Activated B cell treated with CpG ODN at 0.5 μM for 24 hours (primary cell): ENCODE measurements at regions of chr3 and their contacts with region 1.

Region 1: GRCh38 chr3:179604321-179605078 is at the starts of genes MRPL47 and NDUFB5:
- DNase-seq: peak; percentile 82
- ATAC-seq: peak; percentile 96
- H3K4me3 Mint-ChIP-seq: peak within 1 kb of the TSS; percentile 99
- H3K27ac Mint-ChIP-seq: peak within 1 kb of the TSS; percentile 99
- H3K4me1 Mint-ChIP-seq: peaks cover 51% of the 10 kb centered on the region
- H3K27me3 Mint-ChIP-seq: no peaks in the 10 kb centered on the region
- CTCF ChIP-seq: no peak
- total RNA-seq, gene MRPL47: 38.6 and 44.3 TPM in 2 replicates
- total RNA-seq, gene NDUFB5: 63.5 and 67.3 TPM in 2 replicates

Region 2: DNA sequence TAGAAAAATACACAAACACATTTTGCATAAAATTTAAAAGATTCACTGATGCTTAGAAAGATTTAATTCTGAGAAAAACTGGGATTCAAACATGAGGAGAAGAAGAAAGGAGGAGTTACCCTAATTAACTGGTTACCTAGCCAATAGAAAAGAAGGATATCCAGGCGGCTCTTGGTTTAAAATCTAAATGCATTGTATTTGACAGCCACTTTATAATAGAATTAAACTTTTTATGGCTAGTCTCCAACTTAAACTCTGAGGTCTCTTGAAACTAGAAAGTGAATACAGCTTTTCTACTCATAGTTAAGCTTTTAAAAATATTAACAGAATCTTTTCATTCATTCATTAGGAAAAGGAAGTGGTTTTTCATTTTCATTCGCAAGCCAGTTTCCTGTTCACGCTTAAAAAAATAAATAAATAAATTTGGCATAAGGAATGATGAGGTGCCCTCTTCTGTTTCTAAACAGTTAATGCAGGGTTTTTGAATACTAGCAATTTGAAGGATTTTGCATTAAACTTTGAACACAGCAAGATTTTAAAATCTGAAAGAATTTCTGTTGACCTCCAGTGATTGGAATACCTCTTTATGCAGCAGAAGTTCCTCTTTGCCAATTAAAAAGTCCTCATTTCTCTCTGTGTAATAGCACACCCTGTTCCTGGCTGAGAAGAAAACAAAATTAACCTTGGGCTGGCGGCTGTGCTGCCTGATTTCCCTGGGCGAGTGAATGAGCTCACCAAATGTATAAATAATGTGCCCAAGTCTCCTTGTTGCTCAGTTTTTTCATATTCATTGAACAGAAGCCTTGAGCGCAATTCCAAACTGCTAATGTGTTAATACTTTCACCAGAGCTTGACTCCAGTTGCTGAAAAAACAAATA is 638.0 kb before region 1 on chr3:
- CTCF ChIA-PET with region 1: no interaction called
- POLR2A ChIA-PET with region 1: no interaction called
- intact Hi-C with region 1: loop called (anchors 5 kb)
- DNase-seq: no peak
- ATAC-seq: no peak
- H3K4me3 Mint-ChIP-seq: peak overlapping the region; percentile 76
- H3K27ac Mint-ChIP-seq: peak overlapping the region; percentile 81
- H3K4me1 Mint-ChIP-seq: peaks cover 46% of the 10 kb centered on the region
- H3K27me3 Mint-ChIP-seq: no peaks in the 10 kb centered on the region
- CTCF ChIP-seq: no peak

Region 3: DNA sequence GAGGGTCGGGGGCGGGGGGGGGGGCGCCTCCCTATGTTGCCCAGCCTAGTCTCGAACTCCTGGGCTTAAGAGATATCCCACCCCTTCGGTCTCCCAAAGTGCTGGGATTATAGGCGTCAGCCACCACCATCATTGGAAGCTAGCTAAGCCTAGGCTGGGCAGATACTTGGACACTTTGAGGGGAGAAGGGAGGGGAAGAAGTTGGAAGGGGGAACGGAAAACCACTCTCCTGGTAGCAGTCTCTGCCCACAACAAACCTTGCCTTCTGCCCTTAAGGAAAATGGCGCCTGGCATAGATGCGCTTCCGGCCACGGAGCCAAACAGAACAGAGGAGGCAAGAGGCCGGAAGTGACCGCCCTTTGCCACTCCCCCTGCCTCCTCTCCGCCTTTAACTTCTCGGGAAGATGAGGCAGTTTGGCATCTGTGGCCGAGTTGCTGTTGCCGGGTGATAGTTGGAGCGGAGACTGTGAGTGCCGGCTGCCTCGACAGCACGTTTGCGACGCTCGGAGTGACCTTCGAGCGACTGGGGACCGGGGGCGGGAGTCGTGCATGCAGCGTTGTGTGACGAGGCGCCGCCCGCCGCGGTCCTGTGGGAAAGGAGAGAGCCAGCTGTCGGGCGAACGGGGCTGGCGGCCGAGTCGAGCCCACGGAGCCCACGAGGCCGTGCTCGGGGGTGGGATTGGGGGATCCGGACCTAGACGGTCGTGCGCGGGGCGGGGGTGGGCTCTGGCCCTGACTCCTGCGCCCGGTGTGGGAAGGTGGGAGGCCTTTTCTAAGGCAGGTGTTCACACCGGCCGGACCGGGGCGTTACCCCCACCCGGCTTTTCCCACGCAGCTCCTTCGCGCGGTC is 256.9 kb before region 1 on chr3 and contains the start of gene MFN1:
- CTCF ChIA-PET with region 1: no interaction called
- POLR2A ChIA-PET with region 1: interaction called, 7 read pairs
- intact Hi-C with region 1: loop called (anchors 1 kb)
- DNase-seq: peak; percentile 80
- ATAC-seq: peak; percentile 88
- H3K4me3 Mint-ChIP-seq: peak within 1 kb of the TSS; percentile 98
- H3K27ac Mint-ChIP-seq: peak within 1 kb of the TSS; percentile 95
- H3K4me1 Mint-ChIP-seq: peaks cover 35% of the 10 kb centered on the region
- H3K27me3 Mint-ChIP-seq: no peaks in the 10 kb centered on the region
- CTCF ChIP-seq: no peak
- total RNA-seq, gene MFN1: 64.9 and 65.3 TPM in 2 replicates

Region 4: DNA sequence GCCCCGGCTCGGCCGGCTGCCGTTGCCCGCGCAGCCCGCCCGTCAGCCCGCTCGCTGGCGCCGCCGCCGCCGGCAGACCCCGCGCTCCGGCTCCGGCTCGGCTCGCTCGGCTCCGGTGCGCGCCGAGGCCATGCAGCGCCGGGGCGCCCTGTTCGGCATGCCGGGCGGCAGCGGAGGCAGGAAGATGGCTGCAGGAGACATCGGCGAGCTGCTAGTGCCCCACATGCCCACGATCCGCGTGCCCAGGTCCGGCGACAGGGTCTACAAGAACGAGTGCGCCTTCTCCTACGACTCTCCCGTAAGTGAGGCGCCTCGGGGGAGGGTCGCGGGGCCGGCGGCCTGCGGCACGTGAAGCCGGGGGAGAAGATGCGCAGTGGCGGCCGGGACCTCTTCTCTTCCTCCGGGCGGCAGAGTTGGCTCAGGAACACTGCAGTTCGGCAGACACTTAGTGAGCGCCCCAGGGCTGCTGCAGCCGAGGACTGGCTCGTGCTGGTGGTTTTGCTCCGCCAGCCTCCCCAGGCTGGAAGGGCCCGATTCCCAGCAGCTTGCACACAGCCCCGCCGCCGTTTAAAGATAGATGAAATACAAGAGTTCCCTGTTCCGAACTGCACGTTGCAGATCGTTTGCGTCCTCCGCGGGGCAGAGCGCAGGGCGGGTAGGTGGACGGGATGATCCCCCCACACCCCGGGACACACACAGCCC is 48.7 kb after region 1 on chr3:
- CTCF ChIA-PET with region 1: interaction called, 4 read pairs
- POLR2A ChIA-PET with region 1: interaction called, 27 read pairs
- intact Hi-C with region 1: loop called (anchors 1 kb)
- DNase-seq: peak; percentile 66
- ATAC-seq: peak; percentile 38
- H3K4me3 Mint-ChIP-seq: peak overlapping the region; percentile 91
- H3K27ac Mint-ChIP-seq: peak overlapping the region; percentile 87
- H3K4me1 Mint-ChIP-seq: peaks cover 25% of the 10 kb centered on the region
- H3K27me3 Mint-ChIP-seq: no peaks in the 10 kb centered on the region
- CTCF ChIP-seq: no peak

Region 5: DNA sequence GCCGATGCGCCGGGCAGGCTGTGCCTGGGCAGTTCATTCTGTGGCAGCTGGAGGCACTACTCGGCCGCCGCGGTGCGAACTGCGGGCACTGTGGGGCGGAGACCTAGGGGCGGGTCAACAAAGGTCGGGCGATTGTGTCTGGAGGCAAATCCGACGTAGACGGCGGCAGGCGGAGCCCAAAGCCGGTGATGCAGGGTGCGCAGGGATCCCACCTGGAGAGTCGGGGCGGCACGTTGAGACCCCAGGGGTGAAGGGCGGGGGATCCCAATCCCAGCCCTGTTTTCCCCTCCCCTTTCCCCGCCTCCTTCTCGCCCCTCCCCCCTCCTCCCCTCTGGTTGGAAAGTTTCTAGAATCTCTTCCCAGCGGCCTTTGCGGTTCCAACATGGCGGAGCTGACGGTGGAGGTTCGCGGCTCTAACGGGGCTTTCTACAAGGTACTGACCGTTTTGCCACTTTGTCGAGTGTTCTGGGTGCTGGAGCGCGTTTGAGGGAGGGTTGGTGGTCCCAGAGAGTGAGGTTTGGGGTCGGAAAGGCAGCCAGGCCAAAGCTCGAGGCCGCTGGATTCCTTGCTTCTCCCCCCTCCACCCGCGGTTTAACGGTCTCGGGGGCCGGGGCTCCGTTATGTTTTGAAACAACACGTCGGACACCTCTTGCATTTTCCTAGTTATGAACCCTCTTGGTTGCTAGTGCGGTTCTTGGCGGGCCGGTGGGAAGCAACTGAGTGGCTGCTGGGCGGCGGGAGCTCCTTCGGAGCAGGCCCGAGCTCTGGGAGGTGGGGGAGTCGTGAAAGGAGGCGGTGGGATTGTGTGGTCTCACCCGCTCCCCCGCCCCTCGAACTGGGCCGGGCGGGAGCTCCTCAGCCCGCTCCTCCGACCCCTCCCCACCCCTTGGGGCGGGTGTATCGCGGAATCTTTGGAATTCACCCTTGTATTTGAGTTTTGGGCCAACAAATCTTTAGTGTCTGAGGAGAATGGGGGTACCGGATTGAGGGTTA is 1308.1 kb after region 1 on chr3 and contains the start of gene FXR1:
- CTCF ChIA-PET with region 1: no interaction called
- POLR2A ChIA-PET with region 1: no interaction called
- intact Hi-C with region 1: loop called (anchors 2 kb)
- DNase-seq: peak; percentile 90
- ATAC-seq: peak; percentile 95
- H3K4me3 Mint-ChIP-seq: peak within 1 kb of the TSS; percentile 94
- H3K27ac Mint-ChIP-seq: peak within 1 kb of the TSS; percentile 95
- H3K4me1 Mint-ChIP-seq: peaks cover 52% of the 10 kb centered on the region
- H3K27me3 Mint-ChIP-seq: no peaks in the 10 kb centered on the region
- CTCF ChIP-seq: no peak
- total RNA-seq, gene FXR1: 130 TPM in 2 replicates